GM13977 (cell line): ENCODE measurements at regions of chr4 and their contacts with region 1.

Region 1: GRCh38 chr4:76377911-76378310 is 43.0 kb downstream of the CCDC158 start:
- DNase-seq: peak; percentile 27
- CTCF ChIP-seq: peak; percentile 66

Region 2: DNA sequence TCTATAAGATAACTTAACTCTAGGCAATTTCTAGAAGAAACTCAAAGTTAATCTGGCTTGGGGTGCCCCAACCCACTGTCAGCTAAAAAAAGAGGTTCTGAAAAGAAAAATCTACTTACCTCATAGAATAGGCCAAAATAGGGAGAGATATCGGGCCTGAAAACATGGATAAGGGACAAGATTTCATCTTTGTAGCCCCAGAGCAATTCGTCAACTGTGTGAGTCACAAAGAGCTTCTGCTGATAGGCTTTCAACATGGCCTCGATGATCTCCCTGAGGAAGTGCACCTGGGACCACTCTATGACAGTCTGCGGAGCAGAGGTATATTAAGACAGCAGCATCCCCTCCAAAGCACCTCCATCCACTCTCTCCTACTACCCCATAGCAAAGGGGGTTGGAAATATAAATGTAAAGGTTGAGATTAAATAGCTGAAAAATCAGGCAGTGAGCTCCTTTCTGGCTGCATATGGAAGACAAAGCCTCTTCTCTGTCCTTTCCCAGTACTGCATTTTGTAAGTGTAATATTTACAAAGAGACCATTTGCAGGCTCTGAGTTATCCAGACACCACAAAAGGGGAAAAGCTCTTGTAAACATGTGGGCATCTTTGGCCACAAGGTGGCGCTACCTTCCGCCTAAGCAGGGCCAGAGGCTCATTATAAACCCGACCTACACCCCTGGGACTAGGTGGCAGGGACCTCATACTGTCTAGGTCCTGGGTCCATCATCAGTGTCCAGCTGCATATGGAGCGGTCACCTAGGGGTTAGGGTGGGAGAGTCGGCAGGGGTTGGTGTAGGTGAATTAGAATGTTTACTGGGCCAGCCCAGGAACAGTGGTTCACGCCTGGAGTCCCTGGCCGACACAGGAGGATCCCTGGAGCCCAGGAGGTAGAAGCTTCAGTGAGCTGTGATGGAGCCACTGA is 198.3 kb before region 1 on chr4:
- in situ Hi-C with region 1: loop called (anchors 10 kb)
- DNase-seq: peak; percentile 72
- CTCF ChIP-seq: peak; percentile 84